MCF 10A (cell line): ENCODE measurements at regions of chr18 and their contacts with region 1.

Region 1: GRCh38 chr18:26458526-26459232 is 89.7 kb downstream of the KCTD1 start:
- DNase-seq: peak; percentile 80
- H3K4me3 Mint-ChIP-seq: peak overlapping the region; percentile 55
- H3K27ac Mint-ChIP-seq: peak overlapping the region; percentile 89
- H3K4me1 Mint-ChIP-seq: peaks cover 41% of the 10 kb centered on the region
- H3K27me3 Mint-ChIP-seq: no peaks in the 10 kb centered on the region
- CTCF ChIP-seq: no peak

Region 2: DNA sequence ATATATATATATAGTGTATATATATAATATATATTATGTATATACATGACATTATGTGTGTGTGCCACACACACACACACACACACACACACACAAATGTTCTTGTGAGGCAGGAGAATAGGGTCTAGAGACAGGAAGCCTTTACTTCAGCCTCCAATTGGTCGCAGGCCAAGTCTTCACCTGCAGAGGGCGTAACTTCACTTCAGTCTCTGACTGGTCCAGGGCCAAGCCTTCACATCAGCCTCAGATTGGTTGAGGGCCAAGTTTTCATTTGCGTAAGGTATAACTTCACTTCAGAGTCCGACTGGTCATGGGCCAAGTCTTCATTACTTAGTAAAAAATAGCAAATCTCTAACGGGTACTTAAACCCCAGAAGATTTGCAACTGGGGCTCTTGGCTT is 355.1 kb before region 1 on chr18:
- CTCF ChIA-PET with region 1: no interaction called
- POLR2A ChIA-PET with region 1: no interaction called
- intact Hi-C with region 1: no loop called
- DNase-seq: peak; percentile 58
- H3K4me3 Mint-ChIP-seq: no peak overlapping the region
- H3K27ac Mint-ChIP-seq: no peak overlapping the region
- H3K4me1 Mint-ChIP-seq: no peaks in the 10 kb centered on the region
- H3K27me3 Mint-ChIP-seq: no peaks in the 10 kb centered on the region
- CTCF ChIP-seq: no peak

Region 3: DNA sequence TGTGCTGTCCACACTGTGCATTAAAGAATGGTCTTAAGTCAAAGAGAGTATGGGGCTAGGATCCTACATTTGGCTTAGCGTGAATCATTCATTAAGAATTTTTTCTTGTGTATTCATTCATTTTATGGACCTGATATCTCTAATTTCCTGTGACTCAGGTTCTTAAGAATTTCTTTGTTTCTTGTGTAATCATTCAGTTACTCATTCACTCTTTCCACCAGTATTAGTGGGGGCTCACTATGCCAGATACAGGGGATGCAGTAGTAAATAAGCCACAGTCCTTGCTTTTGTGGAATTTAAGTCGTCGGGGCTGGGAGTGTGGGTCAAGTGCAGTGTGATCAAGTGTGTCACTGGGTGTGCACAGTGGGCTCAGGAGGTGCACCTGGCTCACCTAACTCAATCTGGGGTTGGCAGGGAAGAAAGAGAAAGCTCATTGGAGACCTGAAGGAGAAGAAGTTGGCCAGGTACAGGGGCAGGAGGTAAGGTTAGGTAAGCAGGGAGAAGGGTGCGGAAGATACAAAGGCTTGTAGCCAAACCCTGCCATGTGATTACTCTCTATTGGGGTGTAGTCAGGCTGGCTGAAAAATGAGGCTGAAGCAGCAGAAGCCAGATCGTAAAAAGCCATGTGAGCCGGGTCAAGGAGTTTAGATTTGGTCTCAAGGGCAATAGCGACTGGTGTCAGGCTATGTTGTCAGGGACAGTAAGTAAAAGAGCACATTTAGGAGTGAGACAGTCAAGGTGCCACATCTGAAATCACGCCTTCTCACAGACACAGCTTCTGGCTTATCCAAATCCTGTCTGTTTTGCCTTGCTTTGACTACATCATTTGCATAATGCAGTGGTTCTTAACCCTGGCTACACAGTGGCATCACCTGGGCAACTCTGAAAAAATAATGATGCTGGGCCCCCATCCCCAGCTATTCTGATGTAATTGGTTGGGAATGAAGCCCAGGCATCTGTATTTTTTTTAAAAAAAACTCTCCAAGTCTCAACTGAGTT is 22.5 kb after region 1 on chr18:
- CTCF ChIA-PET with region 1: interaction called, 5 read pairs
- POLR2A ChIA-PET with region 1: interaction called, 35 read pairs
- intact Hi-C with region 1: no loop called
- DNase-seq: peak; percentile 88
- H3K4me3 Mint-ChIP-seq: peak overlapping the region; percentile 41
- H3K27ac Mint-ChIP-seq: peak overlapping the region; percentile 88
- H3K4me1 Mint-ChIP-seq: peaks cover 46% of the 10 kb centered on the region
- H3K27me3 Mint-ChIP-seq: no peaks in the 10 kb centered on the region
- CTCF ChIP-seq: no peak

Region 4: GRCh38 chr18:26487437-26487836 is 28.8 kb after region 1 on chr18:
- CTCF ChIA-PET with region 1: interaction called, 13 read pairs
- POLR2A ChIA-PET with region 1: interaction called, 35 read pairs
- intact Hi-C with region 1: no loop called
- DNase-seq: peak; percentile 92
- H3K4me3 Mint-ChIP-seq: no peak overlapping the region
- H3K27ac Mint-ChIP-seq: peak overlapping the region; percentile 83
- H3K4me1 Mint-ChIP-seq: peaks cover 34% of the 10 kb centered on the region
- H3K27me3 Mint-ChIP-seq: no peaks in the 10 kb centered on the region
- CTCF ChIP-seq: no peak

Region 5: GRCh38 chr18:26734760-26735159 is 276.1 kb after region 1 on chr18:
- CTCF ChIA-PET with region 1: no interaction called
- POLR2A ChIA-PET with region 1: no interaction called
- intact Hi-C with region 1: no loop called
- DNase-seq: no peak
- H3K4me3 Mint-ChIP-seq: no peak overlapping the region
- H3K27ac Mint-ChIP-seq: no peak overlapping the region
- H3K4me1 Mint-ChIP-seq: no peaks in the 10 kb centered on the region
- H3K27me3 Mint-ChIP-seq: no peaks in the 10 kb centered on the region
- CTCF ChIP-seq: no peak